Mammary epithelial cell (primary cell): ENCODE measurements at regions of chr6 and their contacts with region 1.

Region 1: DNA sequence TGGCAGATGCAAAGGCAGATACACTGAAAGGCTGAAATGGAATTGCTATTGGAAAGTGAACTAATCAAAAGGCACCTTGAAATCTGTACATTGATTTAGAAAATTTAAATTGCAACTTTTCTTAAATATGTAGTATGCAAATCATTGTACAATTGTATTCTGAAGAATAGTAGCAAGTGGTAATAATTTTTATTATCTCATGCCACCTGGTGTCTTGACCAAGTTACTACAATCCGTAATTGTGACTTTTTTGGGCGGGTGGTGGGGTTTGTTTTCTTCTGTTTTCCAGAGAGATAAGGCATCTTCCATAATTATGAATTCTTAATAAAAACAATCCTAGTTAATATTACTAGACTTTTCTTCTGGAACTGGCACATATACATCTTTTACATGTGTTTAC is 12.5 kb upstream of the BCKDHB start:
- DNase-seq: no peak
- H3K4me3 ChIP-seq: no peak overlapping the region
- H3K27ac ChIP-seq: no peak overlapping the region
- H3K4me1 ChIP-seq: no peaks in the 10 kb centered on the region
- H3K27me3 ChIP-seq: peaks cover 3% of the 10 kb centered on the region
- CTCF ChIP-seq: peak; percentile 35 to 54

Region 2: GRCh38 chr6:79777713-79778579 is 316.1 kb before region 1 on chr6:
- CTCF ChIA-PET with region 1: no interaction called
- dilution Hi-C with region 1: no loop called
- in situ Hi-C with region 1: loop called in 1 of 2 experiments (anchors 25 kb)
- intact Hi-C with region 1: loop called (anchors 1 kb)
- DNase-seq: peak; percentile 70
- H3K4me3 ChIP-seq: peak overlapping the region; percentile 20 to 26 (median 23)
- H3K27ac ChIP-seq: no peak overlapping the region
- H3K4me1 ChIP-seq: no peaks in the 10 kb centered on the region
- H3K27me3 ChIP-seq: no peaks in the 10 kb centered on the region
- CTCF ChIP-seq: peak; percentile 95 to 97

Region 3: DNA sequence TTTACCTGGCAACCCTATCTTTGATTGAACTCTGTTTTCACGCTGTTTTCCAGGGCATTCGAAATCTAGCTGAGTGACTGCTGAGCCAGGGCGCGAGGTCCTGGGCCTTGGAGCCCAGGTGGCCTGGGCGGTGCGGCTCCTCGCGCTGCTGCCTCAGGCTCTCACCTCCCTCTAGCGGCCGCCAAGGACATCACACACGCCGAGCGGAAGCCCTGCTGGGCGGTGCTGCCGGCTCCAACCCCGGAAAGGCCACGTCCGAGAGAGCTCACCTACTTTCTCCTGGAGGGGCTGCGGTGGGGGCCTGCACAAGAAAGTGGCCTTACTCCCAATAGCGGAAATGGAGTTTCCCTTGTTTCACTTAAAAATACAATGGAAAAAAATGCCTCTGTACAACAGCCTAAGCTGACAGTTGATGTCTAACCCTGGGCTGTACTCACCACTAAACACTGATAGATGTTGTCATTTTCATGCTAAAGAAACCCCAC is 224.4 kb before region 1 on chr6:
- CTCF ChIA-PET with region 1: interaction called, 3 read pairs
- dilution Hi-C with region 1: no loop called
- in situ Hi-C with region 1: loop called in 1 of 2 experiments (anchors 10 kb)
- intact Hi-C with region 1: loop called (anchors 2 kb)
- DNase-seq: peak; percentile 64
- H3K4me3 ChIP-seq: no peak overlapping the region
- H3K27ac ChIP-seq: no peak overlapping the region
- H3K4me1 ChIP-seq: peaks cover 38% of the 10 kb centered on the region
- H3K27me3 ChIP-seq: no peaks in the 10 kb centered on the region
- CTCF ChIP-seq: peak; percentile 83 to 92

Region 4: GRCh38 chr6:79878142-79878753 is 215.8 kb before region 1 on chr6:
- CTCF ChIA-PET with region 1: no interaction called
- dilution Hi-C with region 1: no loop called
- in situ Hi-C with region 1: loop called in 1 of 2 experiments (anchors 10 kb)
- intact Hi-C with region 1: loop called (anchors 1 kb)
- DNase-seq: peak; percentile 45
- H3K4me3 ChIP-seq: no peak overlapping the region
- H3K27ac ChIP-seq: peak overlapping the region; percentile 59
- H3K4me1 ChIP-seq: peaks cover 33% of the 10 kb centered on the region
- H3K27me3 ChIP-seq: no peaks in the 10 kb centered on the region
- CTCF ChIP-seq: no peak

Region 5: GRCh38 chr6:79949233-79949632 is 144.8 kb before region 1 on chr6:
- CTCF ChIA-PET with region 1: no interaction called
- dilution Hi-C with region 1: no loop called
- in situ Hi-C with region 1: no loop called
- intact Hi-C with region 1: loop called (anchors 1 kb)
- DNase-seq: peak; percentile 56
- H3K4me3 ChIP-seq: no peak overlapping the region
- H3K27ac ChIP-seq: no peak overlapping the region
- H3K4me1 ChIP-seq: peaks cover 18% of the 10 kb centered on the region
- H3K27me3 ChIP-seq: no peaks in the 10 kb centered on the region
- CTCF ChIP-seq: peak; percentile 23 to 51

Region 6: DNA sequence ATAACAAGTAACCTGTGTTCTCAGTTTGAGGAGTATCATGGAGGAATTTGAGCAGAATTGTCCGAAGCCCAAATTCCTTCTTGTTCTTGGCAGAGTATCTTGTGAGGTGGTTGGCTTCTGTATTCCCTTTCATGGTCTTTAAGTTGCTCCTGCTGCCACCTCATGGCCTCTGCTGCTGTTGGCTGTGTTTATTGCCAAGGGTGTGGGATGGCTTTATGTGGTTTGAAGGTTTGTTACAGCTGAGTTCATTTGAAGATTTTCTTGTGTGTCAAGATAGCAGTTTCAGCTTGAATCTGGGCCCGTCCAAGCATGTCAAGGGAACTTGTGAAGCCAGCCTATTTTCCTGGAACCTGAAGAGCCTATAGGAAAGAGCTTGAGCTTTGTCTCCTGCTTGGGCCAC is 109.8 kb before region 1 on chr6:
- CTCF ChIA-PET with region 1: no interaction called
- dilution Hi-C with region 1: no loop called
- in situ Hi-C with region 1: no loop called
- intact Hi-C with region 1: loop called (anchors 10 kb)
- DNase-seq: peak; percentile 71
- H3K4me3 ChIP-seq: no peak overlapping the region
- H3K27ac ChIP-seq: no peak overlapping the region
- H3K4me1 ChIP-seq: peaks cover 4% of the 10 kb centered on the region
- H3K27me3 ChIP-seq: no peaks in the 10 kb centered on the region
- CTCF ChIP-seq: peak; percentile 17 to 60

Region 7: DNA sequence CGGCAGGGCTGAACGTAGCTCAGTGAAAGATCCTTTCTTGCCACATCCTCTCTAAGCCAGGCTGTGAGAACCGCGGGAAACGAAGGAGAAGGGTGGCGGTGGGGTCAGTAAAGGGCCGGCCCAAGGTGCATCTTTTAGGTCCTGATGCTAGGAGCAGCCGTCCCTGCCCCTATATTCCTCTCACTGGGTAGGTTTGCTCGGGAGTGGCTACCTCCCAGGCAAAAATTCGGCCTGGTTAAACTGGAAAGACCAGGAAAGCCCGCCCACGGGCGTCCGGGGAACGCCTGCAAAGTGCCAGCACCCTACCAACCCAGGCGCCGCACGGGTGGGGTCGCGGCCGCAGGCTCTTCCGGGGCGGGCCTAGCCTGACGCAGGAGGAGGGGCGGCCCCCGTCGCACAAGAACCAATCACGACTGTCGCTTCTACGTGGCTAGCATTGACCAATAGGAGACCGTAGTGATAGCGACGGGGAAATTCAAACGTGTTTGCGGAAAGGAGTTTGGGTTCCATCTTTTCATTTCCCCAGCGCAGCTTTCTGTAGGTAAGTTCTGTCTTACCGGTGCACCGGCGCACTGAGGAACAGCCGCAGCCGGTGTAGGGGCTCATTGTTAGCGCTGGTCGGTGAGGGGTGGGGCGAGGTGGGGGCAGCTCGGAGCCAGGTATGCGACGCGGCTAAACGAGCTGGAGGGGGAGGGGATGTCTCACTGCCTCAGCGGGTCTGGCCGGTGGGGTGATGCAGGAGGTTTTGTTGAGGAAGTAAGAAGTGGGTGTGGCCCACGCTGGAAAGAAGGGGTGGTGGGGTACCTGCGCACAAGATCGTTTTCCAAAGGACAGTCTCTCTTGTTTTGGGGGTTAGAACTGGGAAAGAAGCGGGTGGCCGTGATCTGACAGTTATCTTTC is 89.6 kb before region 1 on chr6 and contains the start of gene TTK:
- CTCF ChIA-PET with region 1: no interaction called
- dilution Hi-C with region 1: no loop called
- in situ Hi-C with region 1: no loop called
- intact Hi-C with region 1: loop called (anchors 5 kb)
- DNase-seq: peak; percentile 96
- H3K4me3 ChIP-seq: peak within 1 kb of the TSS; percentile 54 to 95 (median 76)
- H3K27ac ChIP-seq: peak within 1 kb of the TSS; percentile 71
- H3K4me1 ChIP-seq: peaks cover 9% of the 10 kb centered on the region
- H3K27me3 ChIP-seq: no peaks in the 10 kb centered on the region
- CTCF ChIP-seq: no peak
- total RNA-seq, gene TTK: 1.8 to 15.9 TPM

Region 8: GRCh38 chr6:80566361-80566760 is 472.3 kb after region 1 on chr6:
- CTCF ChIA-PET with region 1: no interaction called
- dilution Hi-C with region 1: no loop called
- in situ Hi-C with region 1: no loop called
- intact Hi-C with region 1: no loop called
- DNase-seq: no peak
- H3K4me3 ChIP-seq: no peak overlapping the region
- H3K27ac ChIP-seq: no peak overlapping the region
- H3K4me1 ChIP-seq: no peaks in the 10 kb centered on the region
- H3K27me3 ChIP-seq: no peaks in the 10 kb centered on the region
- CTCF ChIP-seq: no peak